Endothelial cell of umbilical vein (primary cell): ENCODE measurements at regions of chr15 and their contacts with region 1.

Region 1: DNA sequence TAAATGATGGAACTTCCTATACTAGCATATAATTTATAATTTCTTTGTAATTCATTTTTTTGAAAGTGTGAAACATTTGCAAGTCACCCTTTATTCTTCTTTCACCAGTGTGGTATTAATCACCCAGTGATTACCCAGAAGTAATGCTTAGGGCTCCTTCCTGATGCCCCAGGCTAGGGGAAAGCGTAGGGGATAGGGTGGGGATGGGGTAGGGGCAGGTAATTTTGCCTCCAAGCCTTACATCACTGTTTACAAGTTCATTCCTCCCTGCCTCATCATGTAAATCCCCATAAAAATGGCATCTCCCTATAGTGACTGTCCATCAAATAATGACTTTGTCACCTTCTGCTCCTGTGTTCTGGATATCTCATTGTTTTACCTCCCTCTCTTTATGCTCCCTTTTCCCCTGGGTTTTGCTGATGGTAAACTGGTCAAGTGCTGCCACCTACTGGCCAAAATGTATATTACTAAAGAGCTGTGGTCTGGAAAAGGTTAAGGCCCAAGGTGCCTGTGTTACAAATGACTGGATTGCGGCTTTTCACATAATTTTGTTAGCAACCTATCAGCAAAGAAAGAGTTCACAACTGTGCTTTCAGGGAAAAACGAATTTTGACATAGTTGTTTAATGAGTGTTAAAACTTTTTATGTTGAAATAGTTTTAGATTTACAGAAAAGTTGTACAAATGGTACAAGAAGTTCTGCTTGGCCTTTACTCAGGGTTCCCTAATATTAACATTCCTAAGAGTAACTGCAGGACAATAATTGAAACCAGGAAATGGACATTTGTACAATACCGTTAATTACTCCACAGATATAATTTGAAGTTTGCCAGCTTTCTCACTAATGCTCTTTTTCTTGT is 54.7 kb downstream of the ONECUT1 start:
- DNase-seq: peak; percentile 85
- H3K4me3 ChIP-seq: no peak overlapping the region
- H3K27ac ChIP-seq: no peak overlapping the region
- H3K4me1 ChIP-seq: peaks cover 11% of the 10 kb centered on the region
- H3K27me3 ChIP-seq: peaks cover 0 to 2% of the 10 kb centered on the region in 2 experiments
- CTCF ChIP-seq: peak; percentile 39 to 62
- POLR2A ChIP-seq: no peak

Region 2: GRCh38 chr15:52179278-52180195 is 555.9 kb before region 1 on chr15:
- CTCF ChIA-PET with region 1: interaction called, 24 read pairs
- POLR2A ChIA-PET with region 1: no interaction called
- dilution Hi-C with region 1: no loop called
- intact Hi-C with region 1: loop called (anchors 5 kb)
- DNase-seq: peak; percentile 82
- H3K4me3 ChIP-seq: peak overlapping the region; percentile 18 to 85 (median 70)
- H3K27ac ChIP-seq: peak overlapping the region; percentile 58
- H3K4me1 ChIP-seq: peaks cover 9% of the 10 kb centered on the region
- H3K27me3 ChIP-seq: no peaks in the 10 kb centered on the region
- CTCF ChIP-seq: no peak
- POLR2A ChIP-seq: peak; percentile 59

Region 3: GRCh38 chr15:52261498-52262242 is 473.8 kb before region 1 on chr15:
- CTCF ChIA-PET with region 1: interaction called, 133 read pairs
- POLR2A ChIA-PET with region 1: no interaction called
- dilution Hi-C with region 1: no loop called
- intact Hi-C with region 1: loop called (anchors 1 kb)
- DNase-seq: peak; percentile 95
- H3K4me3 ChIP-seq: no peak overlapping the region
- H3K27ac ChIP-seq: peak overlapping the region; percentile 55
- H3K4me1 ChIP-seq: peaks cover 17% of the 10 kb centered on the region
- H3K27me3 ChIP-seq: no peaks in the 10 kb centered on the region
- CTCF ChIP-seq: peak in 1 of 2 donors; percentile 32
- POLR2A ChIP-seq: peak; percentile 34

Region 4: DNA sequence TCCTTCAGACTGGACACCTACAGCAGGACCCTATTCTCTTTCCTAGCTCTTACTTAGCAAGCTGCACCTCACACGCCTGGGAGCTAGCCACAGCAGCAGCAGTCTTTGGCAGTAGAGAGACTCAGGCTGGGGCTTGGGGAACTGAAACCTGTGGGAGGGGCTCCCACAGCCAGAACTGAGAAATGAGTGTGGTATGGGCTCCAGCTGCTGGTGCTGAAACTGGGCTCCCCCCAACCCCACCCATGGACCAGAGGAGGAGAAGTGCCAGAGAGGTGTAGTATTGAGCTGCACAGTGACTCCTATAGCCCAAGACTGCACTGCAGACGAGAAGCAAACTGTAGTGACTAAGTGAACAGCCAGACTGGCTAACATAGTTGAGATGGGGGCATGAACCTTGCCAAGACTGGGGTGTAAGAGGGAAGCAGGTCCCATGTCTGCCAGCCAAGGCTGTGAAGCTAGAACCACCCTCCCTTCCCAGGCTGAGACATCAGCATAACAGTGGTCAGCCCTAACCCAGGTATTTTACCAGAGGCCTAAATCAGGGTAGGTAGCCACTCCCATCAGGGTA is 269.2 kb before region 1 on chr15:
- CTCF ChIA-PET with region 1: no interaction called
- POLR2A ChIA-PET with region 1: no interaction called
- dilution Hi-C with region 1: no loop called
- intact Hi-C with region 1: loop called (anchors 10 kb)
- DNase-seq: no peak
- H3K4me3 ChIP-seq: no peak overlapping the region
- H3K27ac ChIP-seq: no peak overlapping the region
- H3K4me1 ChIP-seq: peaks cover 28% of the 10 kb centered on the region
- H3K27me3 ChIP-seq: no peaks in the 10 kb centered on the region
- CTCF ChIP-seq: no peak
- POLR2A ChIP-seq: no peak

Region 5: GRCh38 chr15:52528991-52529926 is 206.2 kb before region 1 on chr15:
- CTCF ChIA-PET with region 1: interaction called, 3 read pairs
- POLR2A ChIA-PET with region 1: no interaction called
- dilution Hi-C with region 1: no loop called
- intact Hi-C with region 1: loop called (anchors 1 kb)
- DNase-seq: peak; percentile 75
- H3K4me3 ChIP-seq: peak overlapping the region; percentile 32 to 89 (median 58)
- H3K27ac ChIP-seq: no peak overlapping the region
- H3K4me1 ChIP-seq: peaks cover 17% of the 10 kb centered on the region
- H3K27me3 ChIP-seq: no peaks in the 10 kb centered on the region
- CTCF ChIP-seq: peak in 1 of 2 donors; percentile 11
- POLR2A ChIP-seq: no peak

Region 6: GRCh38 chr15:52679232-52680040 is 56.0 kb before region 1 on chr15 and contains the start of gene ATOSA:
- CTCF ChIA-PET with region 1: interaction called, 10 read pairs
- POLR2A ChIA-PET with region 1: no interaction called
- dilution Hi-C with region 1: no loop called
- intact Hi-C with region 1: loop called (anchors 1 kb)
- DNase-seq: peak; percentile 90
- H3K4me3 ChIP-seq: peak within 1 kb of the TSS; percentile 59 to 87 (median 80)
- H3K27ac ChIP-seq: peak within 1 kb of the TSS; percentile 92
- H3K4me1 ChIP-seq: peaks cover 18% of the 10 kb centered on the region
- H3K27me3 ChIP-seq: peaks cover 11 to 17% of the 10 kb centered on the region in 2 experiments
- CTCF ChIP-seq: no peak
- POLR2A ChIP-seq: no peak
- total RNA-seq, gene ATOSA: 39.1 and 41.1 TPM in 2 replicates

Region 7: GRCh38 chr15:52936489-52936888 is 201.0 kb after region 1 on chr15:
- CTCF ChIA-PET with region 1: no interaction called
- POLR2A ChIA-PET with region 1: no interaction called
- dilution Hi-C with region 1: no loop called
- intact Hi-C with region 1: no loop called
- DNase-seq: no peak
- H3K4me3 ChIP-seq: no peak overlapping the region
- H3K27ac ChIP-seq: no peak overlapping the region
- H3K4me1 ChIP-seq: no peaks in the 10 kb centered on the region
- H3K27me3 ChIP-seq: no peaks in the 10 kb centered on the region
- CTCF ChIP-seq: no peak
- POLR2A ChIP-seq: no peak